Heart left ventricle (tissue), 16 donors: ENCODE measurements at regions of chr1 and their contacts with region 1.

Region 1: GRCh38 chr1:19485362-19486187 is at the start of gene CAPZB:
- DNase-seq: peak; percentile 97 to 98 (median 97)
- ATAC-seq: peak; percentile 85 to 95 (median 93)
- H3K4me3 ChIP-seq: peak within 1 kb of the TSS; percentile 70 to 100 (median 98)
- H3K27ac ChIP-seq: peak within 1 kb of the TSS; percentile 95 to 100 (median 98)
- H3K4me1 ChIP-seq: peaks cover 18 to 64% (median 53%) of the 10 kb centered on the region in 12 donors
- H3K27me3 ChIP-seq: no peaks in the 10 kb centered on the region
- CTCF ChIP-seq: no peak
- POLR2A ChIP-seq: peak in 1 of 2 donors; percentile 88
- total RNA-seq, gene CAPZB: 77.8 to 348 (median 237) TPM

Region 2: DNA sequence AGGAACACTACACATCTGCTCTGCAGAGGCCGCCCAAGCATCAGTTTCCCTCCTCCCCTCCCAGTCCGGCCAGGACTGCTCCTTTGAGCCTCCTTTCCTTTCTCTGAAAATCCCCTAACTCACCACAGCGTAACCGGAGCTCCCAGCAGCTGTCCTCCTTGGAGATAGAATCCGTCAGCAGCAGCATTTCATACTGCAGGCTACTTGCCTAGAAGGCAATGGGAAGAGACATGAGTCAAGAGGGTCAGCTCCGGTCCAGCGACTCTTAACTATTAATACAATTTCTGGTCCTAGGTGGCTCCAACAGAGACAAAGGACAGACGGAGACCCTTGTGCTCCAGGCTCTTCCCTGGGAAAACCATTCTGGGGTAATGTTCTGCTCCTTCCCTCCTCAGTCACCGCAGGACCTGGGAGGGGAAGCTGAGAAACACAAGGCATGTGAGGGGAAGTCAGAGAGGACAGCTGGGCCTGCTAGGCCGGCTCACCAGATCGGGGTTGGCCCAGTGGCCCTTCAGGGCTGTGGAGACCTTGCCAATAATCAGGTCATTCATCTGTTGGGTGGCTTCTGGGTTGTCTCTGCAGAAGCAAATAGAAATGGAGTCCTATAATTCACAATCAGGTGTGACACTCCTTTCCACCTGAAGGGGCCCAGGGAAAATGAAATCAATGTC is 375.2 kb before region 1 on chr1:
- intact Hi-C with region 1: no loop called
- DNase-seq: no peak
- ATAC-seq: no peak
- H3K4me3 ChIP-seq: no peak overlapping the region
- H3K27ac ChIP-seq: no peak overlapping the region
- H3K4me1 ChIP-seq: no peaks in the 10 kb centered on the region
- H3K27me3 ChIP-seq: no peaks in the 10 kb centered on the region
- CTCF ChIP-seq: no peak
- POLR2A ChIP-seq: no peak

Region 3: DNA sequence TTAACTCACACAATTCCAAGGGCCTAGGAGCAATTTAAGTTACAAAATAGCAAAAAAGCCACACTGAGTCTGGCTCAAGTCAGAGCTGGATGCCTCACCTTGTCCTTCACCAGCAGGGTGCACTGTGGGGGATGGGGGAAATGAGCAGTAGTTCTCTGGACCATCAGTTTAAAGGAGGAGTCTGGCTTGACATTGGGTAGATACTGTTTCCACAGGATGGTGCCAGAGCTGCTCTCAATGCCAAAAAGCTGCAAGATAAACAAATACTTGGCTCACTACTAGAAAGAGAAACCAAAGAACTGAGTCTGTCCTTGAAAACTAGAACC is 253.1 kb before region 1 on chr1:
- intact Hi-C with region 1: no loop called
- DNase-seq: peak in 4 of 5 donors; percentile 39 to 72 (median 56)
- ATAC-seq: peak; percentile 82 to 93 (median 92)
- H3K4me3 ChIP-seq: no peak overlapping the region
- H3K27ac ChIP-seq: peak overlapping the region in 8 of 12 donors; percentile 31 to 79 (median 52)
- H3K4me1 ChIP-seq: peaks cover 0 to 23% (median 9%) of the 10 kb centered on the region in 12 donors
- H3K27me3 ChIP-seq: no peaks in the 10 kb centered on the region
- CTCF ChIP-seq: peak in 3 of 12 donors; percentile 22 to 38 (median 22)
- POLR2A ChIP-seq: no peak

Region 4: DNA sequence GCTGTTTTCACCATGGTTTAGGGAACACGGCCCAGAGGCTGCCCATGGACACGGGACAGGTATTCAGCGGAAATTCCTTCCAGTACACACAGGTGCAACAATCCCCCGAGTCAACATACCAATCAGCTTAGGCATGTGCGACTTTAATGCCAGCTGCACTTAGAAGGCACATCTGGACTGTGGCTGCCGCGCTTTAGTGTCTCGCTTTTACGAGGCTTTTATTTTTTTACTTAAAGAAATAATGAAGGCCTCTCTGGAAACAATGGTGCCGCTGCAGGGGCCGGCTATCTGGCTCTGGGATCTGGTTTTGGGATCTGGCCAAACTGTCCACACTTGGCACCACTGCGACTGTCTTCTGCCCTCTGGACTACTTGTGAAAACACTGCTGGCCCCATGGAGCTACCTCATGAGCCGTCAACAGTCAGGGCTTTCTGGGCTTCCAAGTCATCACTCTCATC is 118.0 kb before region 1 on chr1:
- intact Hi-C with region 1: no loop called
- DNase-seq: no peak
- ATAC-seq: no peak
- H3K4me3 ChIP-seq: no peak overlapping the region
- H3K27ac ChIP-seq: peak overlapping the region in 2 of 12 donors; percentile 18 to 27
- H3K4me1 ChIP-seq: peaks cover 4 to 65% (median 28%) of the 10 kb centered on the region in 12 donors
- H3K27me3 ChIP-seq: no peaks in the 10 kb centered on the region
- CTCF ChIP-seq: no peak
- POLR2A ChIP-seq: no peak

Region 5: DNA sequence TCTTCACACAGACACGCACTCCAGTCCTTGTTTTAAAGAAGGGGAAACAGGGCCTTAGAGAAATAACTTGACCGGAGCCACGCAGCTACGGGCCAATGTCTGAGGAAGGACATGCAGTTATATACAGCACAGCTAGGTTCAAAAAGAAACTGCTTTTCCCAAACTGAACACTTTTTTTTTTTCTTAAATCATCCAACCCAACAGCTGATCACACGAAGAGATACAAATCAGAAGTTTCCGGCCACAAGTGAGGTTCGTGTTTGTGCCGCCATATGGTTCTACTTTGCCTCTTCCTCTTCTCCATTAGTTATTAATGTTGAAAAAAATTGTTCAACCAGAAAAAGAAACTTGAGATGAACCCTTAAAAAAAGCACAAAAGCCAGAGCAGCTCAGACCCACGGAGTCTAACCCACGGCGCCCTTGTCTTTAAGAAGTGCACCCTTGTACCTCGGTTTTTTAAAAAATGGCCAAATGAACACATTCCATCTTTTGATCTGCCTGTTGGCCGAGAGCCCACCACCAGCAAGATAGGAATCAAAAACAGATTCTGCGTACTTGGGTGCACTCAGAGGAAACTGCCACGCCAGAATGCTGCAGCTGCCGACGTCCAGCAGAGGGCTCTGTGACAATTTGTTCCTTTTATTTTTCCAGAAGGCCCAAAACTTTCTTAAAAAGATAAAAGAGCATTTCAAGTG is 94.5 kb before region 1 on chr1:
- intact Hi-C with region 1: loop called in 5 of 10 experiments (anchors 5 to 10 kb)
- DNase-seq: peak in 3 of 5 donors; percentile 59 to 70 (median 62)
- ATAC-seq: peak in 3 of 4 donors; percentile 19 to 55 (median 55)
- H3K4me3 ChIP-seq: peak overlapping the region in 8 of 12 donors; percentile 2 to 38 (median 26)
- H3K27ac ChIP-seq: peak overlapping the region; percentile 47 to 84 (median 72)
- H3K4me1 ChIP-seq: peaks cover 3 to 79% (median 51%) of the 10 kb centered on the region in 12 donors
- H3K27me3 ChIP-seq: no peaks in the 10 kb centered on the region
- CTCF ChIP-seq: peak; percentile 60 to 88 (median 74)
- POLR2A ChIP-seq: no peak

Region 6: GRCh38 chr1:19439464-19440171 is 46.0 kb before region 1 on chr1:
- intact Hi-C with region 1: loop called in 4 of 10 experiments (anchors 5 to 10 kb)
- DNase-seq: peak in 3 of 5 donors; percentile 49 to 84 (median 75)
- ATAC-seq: peak; percentile 57 to 71 (median 64)
- H3K4me3 ChIP-seq: no peak overlapping the region
- H3K27ac ChIP-seq: peak overlapping the region; percentile 80 to 97 (median 84)
- H3K4me1 ChIP-seq: peaks cover 55 to 100% (median 94%) of the 10 kb centered on the region in 12 donors
- H3K27me3 ChIP-seq: no peaks in the 10 kb centered on the region
- CTCF ChIP-seq: peak in 10 of 12 donors; percentile 7 to 52 (median 30)
- POLR2A ChIP-seq: no peak

Region 7: GRCh38 chr1:19596714-19597495 is 111.3 kb after region 1 on chr1:
- intact Hi-C with region 1: loop called in 8 of 10 experiments (anchors 5 to 10 kb)
- DNase-seq: peak; percentile 97 to 98 (median 98)
- ATAC-seq: peak; percentile 90 to 95 (median 94)
- H3K4me3 ChIP-seq: peak overlapping the region; percentile 63 to 95 (median 88)
- H3K27ac ChIP-seq: peak overlapping the region; percentile 91 to 98 (median 96)
- H3K4me1 ChIP-seq: peaks cover 0 to 51% (median 35%) of the 10 kb centered on the region in 12 donors
- H3K27me3 ChIP-seq: no peaks in the 10 kb centered on the region
- CTCF ChIP-seq: no peak
- POLR2A ChIP-seq: peak in 1 of 2 donors; percentile 74

Region 8: GRCh38 chr1:19651141-19651737 is 165.7 kb after region 1 on chr1:
- intact Hi-C with region 1: loop called in 7 of 10 experiments (anchors 5 to 10 kb)
- DNase-seq: peak in 4 of 5 donors; percentile 64 to 70 (median 66)
- ATAC-seq: peak; percentile 75 to 87 (median 82)
- H3K4me3 ChIP-seq: peak overlapping the region in 5 of 12 donors; percentile 0 to 33 (median 15)
- H3K27ac ChIP-seq: peak overlapping the region; percentile 4 to 95 (median 78)
- H3K4me1 ChIP-seq: peaks cover 12 to 77% (median 54%) of the 10 kb centered on the region in 12 donors
- H3K27me3 ChIP-seq: peaks cover 0 to 5% (median 0%) of the 10 kb centered on the region in 9 donors
- CTCF ChIP-seq: peak; percentile 60 to 82 (median 76)
- POLR2A ChIP-seq: no peak